IMR-90 (cell line): ENCODE measurements at regions of chr5 and their contacts with region 1.

Region 1: DNA sequence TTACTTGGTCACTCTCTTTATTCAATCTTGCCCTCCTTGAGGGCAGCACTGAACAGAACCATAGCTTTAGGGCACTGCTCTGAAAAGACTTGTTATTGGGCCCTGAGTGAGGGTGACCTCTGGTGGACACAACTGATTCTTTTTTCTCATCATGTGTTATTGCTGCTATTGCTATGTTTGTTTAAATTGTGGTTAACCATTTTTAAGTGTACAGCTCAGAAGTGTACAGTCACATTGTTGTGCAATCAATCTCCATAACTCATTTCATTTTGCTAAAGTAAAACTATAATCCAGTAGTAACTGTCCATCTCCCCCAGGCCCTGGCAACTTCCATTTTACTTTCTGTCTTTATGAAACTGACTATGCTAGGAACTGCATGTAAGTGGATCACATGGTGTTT is 351.1 kb upstream of the RIOK2 start:
- DNase-seq: peak; percentile 94
- ATAC-seq: peak; percentile 98
- H3K4me3 ChIP-seq: no peak overlapping the region
- H3K27ac ChIP-seq: no peak overlapping the region
- H3K4me1 ChIP-seq: no peaks in the 10 kb centered on the region; the same call in 1 of the 2 replicates
- H3K27me3 ChIP-seq: peaks cover 12% of the 10 kb centered on the region
- CTCF ChIP-seq: peak; percentile 72
- POLR2A ChIP-seq: no peak
- RAD21 ChIP-seq: peak; percentile 73

Region 2: DNA sequence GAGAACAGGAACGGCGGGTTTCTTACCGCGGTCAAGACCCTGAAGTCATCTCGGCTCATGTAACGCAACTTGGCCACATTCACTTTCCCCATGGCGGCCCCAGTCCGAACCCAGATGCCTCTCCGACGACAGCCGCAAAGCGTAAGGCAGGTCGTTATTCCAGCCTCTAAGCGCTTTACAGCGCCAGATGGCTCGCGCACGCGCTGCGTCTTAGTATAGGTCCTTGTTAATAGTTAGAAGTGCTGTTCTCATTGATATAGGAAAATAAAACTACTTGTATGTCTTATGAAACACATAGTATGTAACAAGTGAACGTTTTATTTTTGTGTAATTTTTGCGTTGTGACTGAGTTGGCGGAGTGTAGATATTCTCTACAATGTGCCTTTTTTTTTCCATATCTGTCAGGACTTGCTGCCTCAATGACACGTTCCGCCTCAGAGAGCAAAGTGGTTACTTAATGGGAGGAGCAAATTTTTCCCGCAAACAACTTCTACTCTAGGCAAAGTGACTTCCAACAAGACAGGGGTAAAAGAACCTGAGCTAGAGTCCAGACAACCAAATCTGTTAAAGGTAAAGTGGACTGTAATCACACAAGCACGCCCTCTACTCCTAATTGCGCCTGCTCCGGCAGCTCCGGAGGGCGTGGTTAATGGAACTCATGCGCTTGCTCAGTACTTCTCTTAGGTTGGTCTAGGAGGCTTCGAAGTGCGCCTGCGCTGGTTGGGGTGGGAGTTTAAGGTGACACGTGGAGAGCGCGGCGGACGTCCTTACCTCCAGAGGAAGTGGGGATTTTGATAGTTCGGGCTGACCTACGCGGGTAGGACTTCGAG is 350.9 kb before region 1 on chr5 and contains the start of gene RIOK2:
- CTCF ChIA-PET with region 1: no interaction called
- POLR2A ChIA-PET with region 1: no interaction called
- dilution Hi-C with region 1: no loop called
- in situ Hi-C with region 1: no loop called
- intact Hi-C with region 1: loop called (anchors 5 kb)
- DNase-seq: peak; percentile 93
- ATAC-seq: peak; percentile 96
- H3K4me3 ChIP-seq: peak within 1 kb of the TSS; percentile 82
- H3K27ac ChIP-seq: peak within 1 kb of the TSS; percentile 86
- H3K4me1 ChIP-seq: peaks cover 2% of the 10 kb centered on the region; the same call in 1 of the 2 replicates
- H3K27me3 ChIP-seq: no peaks in the 10 kb centered on the region
- CTCF ChIP-seq: no peak
- POLR2A ChIP-seq: peak; percentile 87
- RAD21 ChIP-seq: peak; percentile 16; the same call in 1 of the 2 replicates
- total RNA-seq, gene RIOK2: 17.7 and 26.1 TPM in 2 replicates

Region 3: DNA sequence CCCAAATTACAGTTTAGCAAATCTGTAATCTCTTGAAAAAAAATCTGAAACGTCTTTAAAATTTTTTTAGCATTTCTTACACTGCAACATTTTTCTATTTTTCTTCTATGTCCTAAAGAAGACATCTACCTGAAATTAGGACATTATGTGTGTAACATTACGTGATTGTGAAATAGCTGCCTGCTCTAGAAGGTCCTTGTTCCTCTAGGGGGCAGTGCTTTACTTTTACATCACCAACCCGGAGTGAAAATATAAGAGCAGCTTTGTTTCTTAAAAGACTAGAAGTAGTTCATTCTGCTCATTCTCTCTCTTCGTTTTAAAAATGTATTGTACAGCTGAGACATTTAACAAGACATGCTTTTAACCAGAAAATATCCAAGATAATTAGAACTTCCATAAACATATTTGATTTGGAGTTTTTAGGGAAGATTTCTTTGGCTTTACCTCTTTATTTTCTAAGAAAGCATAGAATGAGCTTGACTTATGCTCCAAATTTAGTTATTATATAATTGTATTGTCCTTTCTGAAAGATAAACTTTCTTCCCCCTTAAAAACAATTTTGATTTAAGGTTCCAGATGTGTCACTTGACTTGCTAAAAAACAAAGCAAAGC is 303.0 kb before region 1 on chr5:
- CTCF ChIA-PET with region 1: interaction called, 16 read pairs
- POLR2A ChIA-PET with region 1: no interaction called
- dilution Hi-C with region 1: no loop called
- in situ Hi-C with region 1: no loop called
- intact Hi-C with region 1: loop called (anchors 1 kb)
- DNase-seq: peak; percentile 86
- ATAC-seq: peak; percentile 87
- H3K4me3 ChIP-seq: no peak overlapping the region
- H3K27ac ChIP-seq: no peak overlapping the region
- H3K4me1 ChIP-seq: no peaks in the 10 kb centered on the region
- H3K27me3 ChIP-seq: no peaks in the 10 kb centered on the region
- CTCF ChIP-seq: peak; percentile 79
- POLR2A ChIP-seq: no peak
- RAD21 ChIP-seq: peak; percentile 77

Region 4: GRCh38 chr5:97297063-97297703 is 237.0 kb before region 1 on chr5:
- CTCF ChIA-PET with region 1: interaction called, 12 read pairs
- POLR2A ChIA-PET with region 1: no interaction called
- dilution Hi-C with region 1: no loop called
- in situ Hi-C with region 1: no loop called
- intact Hi-C with region 1: loop called (anchors 5 kb)
- DNase-seq: peak; percentile 23
- ATAC-seq: peak; percentile 62
- H3K4me3 ChIP-seq: no peak overlapping the region
- H3K27ac ChIP-seq: no peak overlapping the region
- H3K4me1 ChIP-seq: no peaks in the 10 kb centered on the region; the same call in 1 of the 2 replicates
- H3K27me3 ChIP-seq: no peaks in the 10 kb centered on the region
- CTCF ChIP-seq: peak; percentile 54
- POLR2A ChIP-seq: no peak
- RAD21 ChIP-seq: peak; percentile 59

Region 5: GRCh38 chr5:97591781-97592180 is 57.6 kb after region 1 on chr5:
- CTCF ChIA-PET with region 1: no interaction called
- POLR2A ChIA-PET with region 1: no interaction called
- dilution Hi-C with region 1: no loop called
- in situ Hi-C with region 1: no loop called
- intact Hi-C with region 1: loop called (anchors 5 kb)
- DNase-seq: no peak
- ATAC-seq: no peak
- H3K4me3 ChIP-seq: no peak overlapping the region
- H3K27ac ChIP-seq: no peak overlapping the region
- H3K4me1 ChIP-seq: no peaks in the 10 kb centered on the region
- H3K27me3 ChIP-seq: no peaks in the 10 kb centered on the region
- CTCF ChIP-seq: no peak
- POLR2A ChIP-seq: no peak
- RAD21 ChIP-seq: no peak

Region 6: GRCh38 chr5:97608501-97608900 is 74.3 kb after region 1 on chr5:
- CTCF ChIA-PET with region 1: no interaction called
- POLR2A ChIA-PET with region 1: no interaction called
- dilution Hi-C with region 1: no loop called
- in situ Hi-C with region 1: no loop called
- intact Hi-C with region 1: no loop called
- DNase-seq: no peak
- ATAC-seq: no peak
- H3K4me3 ChIP-seq: no peak overlapping the region
- H3K27ac ChIP-seq: no peak overlapping the region
- H3K4me1 ChIP-seq: no peaks in the 10 kb centered on the region
- H3K27me3 ChIP-seq: no peaks in the 10 kb centered on the region
- CTCF ChIP-seq: no peak
- POLR2A ChIP-seq: no peak
- RAD21 ChIP-seq: no peak

Region 7: DNA sequence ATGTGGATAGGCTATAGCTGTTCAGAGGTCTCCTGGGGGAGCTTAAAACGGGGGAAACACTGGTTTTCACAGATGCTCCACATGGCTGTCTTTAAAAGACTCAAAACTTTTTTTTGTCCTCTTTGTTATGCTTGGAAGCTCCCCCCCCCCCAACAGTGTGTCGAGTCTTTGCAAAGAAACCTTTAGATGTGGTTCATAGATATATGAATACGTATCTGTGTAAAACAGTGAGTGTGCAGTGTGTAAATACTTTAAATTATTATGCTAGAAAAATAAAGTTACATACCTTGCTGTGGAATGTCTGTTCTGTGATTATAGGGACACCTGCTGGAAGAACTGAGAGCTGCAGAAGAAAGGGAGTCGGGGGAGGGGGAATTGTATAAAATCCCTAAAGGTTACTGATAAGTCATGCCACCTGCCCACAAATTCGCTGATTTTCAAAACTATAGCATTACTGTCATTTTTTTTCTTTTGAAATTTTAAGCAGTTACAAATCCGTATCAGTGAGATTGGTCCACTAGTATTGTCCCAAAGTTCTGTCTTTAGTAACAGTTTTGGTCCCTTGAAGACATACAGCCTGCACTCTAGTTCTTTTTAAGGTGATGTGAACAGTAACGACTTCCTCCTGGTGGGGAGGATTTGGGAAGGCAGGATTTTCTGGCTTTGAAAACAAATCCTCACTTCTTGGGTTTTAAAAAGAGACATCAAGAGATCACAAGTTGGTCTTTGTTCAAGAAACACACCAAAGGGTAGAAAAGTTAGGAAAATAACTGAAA is 1262.2 kb after region 1 on chr5:
- CTCF ChIA-PET with region 1: no interaction called
- POLR2A ChIA-PET with region 1: no interaction called
- dilution Hi-C with region 1: no loop called
- in situ Hi-C with region 1: loop called (anchors 25 kb)
- intact Hi-C with region 1: no loop called
- DNase-seq: peak; percentile 77
- ATAC-seq: peak; percentile 73
- H3K4me3 ChIP-seq: no peak overlapping the region
- H3K27ac ChIP-seq: no peak overlapping the region
- H3K4me1 ChIP-seq: no peaks in the 10 kb centered on the region; the same call in 1 of the 2 replicates
- H3K27me3 ChIP-seq: no peaks in the 10 kb centered on the region
- CTCF ChIP-seq: peak; percentile 81
- POLR2A ChIP-seq: peak; percentile 48
- RAD21 ChIP-seq: peak; percentile 61